T-cell (primary cell): ENCODE measurements at regions of chr6 and their contacts with region 1.

Region 1: DNA sequence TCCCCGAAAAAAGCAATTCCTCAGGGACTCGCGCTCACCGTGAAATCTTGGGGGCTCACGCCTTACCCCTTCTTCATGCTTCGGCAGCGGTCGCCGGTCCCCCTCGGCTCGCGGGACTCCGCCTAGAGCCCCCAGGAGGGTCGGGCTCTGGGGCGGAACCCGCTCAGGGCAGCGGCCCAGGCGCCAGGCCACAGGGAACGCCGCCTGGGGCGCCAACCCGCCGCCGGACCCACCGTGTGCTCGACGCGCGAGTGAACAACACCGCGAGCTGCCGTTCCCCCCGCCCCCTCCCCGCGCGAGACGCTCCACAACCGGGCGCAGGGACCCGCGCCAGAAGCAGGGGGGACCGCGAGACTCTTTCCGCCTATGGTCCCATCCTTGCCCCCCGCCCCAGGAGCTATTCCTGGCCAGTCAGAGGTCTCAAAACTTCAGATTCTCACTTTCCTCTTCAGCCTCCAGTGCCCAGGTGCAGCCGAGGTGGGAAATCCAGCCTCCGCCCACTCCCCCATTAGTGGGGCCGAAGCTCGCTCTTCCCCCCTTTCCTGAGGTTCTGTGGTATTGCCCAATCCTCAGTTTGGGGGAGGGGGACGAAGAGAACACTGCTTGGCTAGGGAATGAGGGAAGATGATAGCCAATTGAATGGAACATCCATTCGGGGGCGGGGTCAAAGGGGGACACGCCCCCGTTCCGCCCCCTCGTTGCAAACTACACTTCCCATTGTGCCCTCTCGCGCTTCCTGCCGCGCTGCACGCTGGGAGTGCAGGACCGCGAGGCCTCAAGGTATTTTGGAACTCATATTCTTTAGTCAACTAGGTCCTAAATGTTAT is at the start of gene WASF1:
- DNase-seq: peak; percentile 82 to 94 (median 86)
- ATAC-seq: peak; percentile 86 to 92 (median 88)
- H3K4me3 ChIP-seq: peak within 1 kb of the TSS; percentile 86 to 88
- H3K4me3 Mint-ChIP-seq: peak within 1 kb of the TSS in 2 of 3 donors; percentile 79 to 84
- H3K27ac ChIP-seq: peak within 1 kb of the TSS; percentile 79
- H3K27ac Mint-ChIP-seq: peak within 1 kb of the TSS; percentile 29 to 42
- H3K4me1 ChIP-seq: peaks cover 23 to 31% of the 10 kb centered on the region in 2 experiments
- H3K4me1 Mint-ChIP-seq: peaks cover 5 to 8% (median 7%) of the 10 kb centered on the region in 3 donors
- H3K27me3 ChIP-seq: no peaks in the 10 kb centered on the region
- H3K27me3 Mint-ChIP-seq: peaks cover 3 to 13% of the 10 kb centered on the region in 2 donors
- total RNA-seq, gene WASF1: 0.23 to 1.2 (median 1.0) TPM

Region 2: GRCh38 chr6:110217266-110217665 is 37.7 kb after region 1 on chr6:
- CTCF ChIA-PET with region 1: interaction called in 1 of 2 experiments, 4 read pairs
- POLR2A ChIA-PET with region 1: interaction called, 3 to 10 read pairs
- DNase-seq: no peak
- ATAC-seq: no peak
- H3K4me3 ChIP-seq: no peak overlapping the region
- H3K4me3 Mint-ChIP-seq: no peak overlapping the region
- H3K27ac ChIP-seq: no peak overlapping the region
- H3K27ac Mint-ChIP-seq: no peak overlapping the region
- H3K4me1 ChIP-seq: no peaks in the 10 kb centered on the region
- H3K4me1 Mint-ChIP-seq: no peaks in the 10 kb centered on the region
- H3K27me3 ChIP-seq: no peaks in the 10 kb centered on the region
- H3K27me3 Mint-ChIP-seq: no peaks in the 10 kb centered on the region